Vagina (tissue), 2 donors: ENCODE measurements at regions of chr9 and their contacts with region 1.

Region 1: GRCh38 chr9:95584176-95584575 is 67.4 kb upstream of the PTCH1 start:
- DNase-seq: no peak
- H3K4me3 ChIP-seq: no peak overlapping the region
- H3K27ac ChIP-seq: no peak overlapping the region
- H3K4me1 ChIP-seq: no peaks in the 10 kb centered on the region
- H3K27me3 ChIP-seq: no peaks in the 10 kb centered on the region
- CTCF ChIP-seq: no peak
- POLR2A ChIP-seq: no peak

Region 2: DNA sequence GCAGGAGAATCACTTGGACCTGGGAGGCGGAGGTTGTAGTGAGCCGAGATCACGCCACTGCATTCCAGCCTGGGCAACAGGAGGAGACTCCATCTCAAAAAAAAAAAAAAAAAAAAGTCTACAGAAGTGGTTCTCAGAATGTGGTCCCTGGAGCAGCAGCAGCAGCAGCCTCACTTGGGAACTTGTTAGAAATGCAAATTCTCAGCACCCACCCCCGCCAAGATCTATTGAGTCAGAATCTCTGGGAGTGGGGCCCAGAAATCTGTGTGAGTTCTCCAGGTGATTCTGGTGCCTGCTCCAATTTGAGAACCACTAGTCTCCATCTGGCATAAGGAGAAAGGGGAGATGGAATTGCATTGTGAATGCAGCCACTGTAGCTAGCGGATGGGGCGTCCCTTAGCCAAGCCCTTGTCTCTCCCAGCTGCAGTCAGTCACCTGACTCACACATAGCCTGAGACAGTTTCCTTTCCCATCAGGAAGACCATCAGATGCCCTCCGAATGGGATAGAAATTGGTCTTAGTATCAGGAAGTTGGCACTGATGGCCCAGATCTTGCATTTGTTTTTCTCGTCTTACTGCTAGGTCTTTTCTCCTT is 55.2 kb before region 1 on chr9:
- intact Hi-C with region 1: loop called (anchors 2 kb)
- DNase-seq: no peak
- H3K4me3 ChIP-seq: no peak overlapping the region
- H3K27ac ChIP-seq: no peak overlapping the region
- H3K4me1 ChIP-seq: no peaks in the 10 kb centered on the region
- H3K27me3 ChIP-seq: no peaks in the 10 kb centered on the region
- CTCF ChIP-seq: no peak
- POLR2A ChIP-seq: no peak